Psoas muscle (tissue), 8 donors: ENCODE measurements at regions of chr20 and their contacts with region 1.

Region 1: DNA sequence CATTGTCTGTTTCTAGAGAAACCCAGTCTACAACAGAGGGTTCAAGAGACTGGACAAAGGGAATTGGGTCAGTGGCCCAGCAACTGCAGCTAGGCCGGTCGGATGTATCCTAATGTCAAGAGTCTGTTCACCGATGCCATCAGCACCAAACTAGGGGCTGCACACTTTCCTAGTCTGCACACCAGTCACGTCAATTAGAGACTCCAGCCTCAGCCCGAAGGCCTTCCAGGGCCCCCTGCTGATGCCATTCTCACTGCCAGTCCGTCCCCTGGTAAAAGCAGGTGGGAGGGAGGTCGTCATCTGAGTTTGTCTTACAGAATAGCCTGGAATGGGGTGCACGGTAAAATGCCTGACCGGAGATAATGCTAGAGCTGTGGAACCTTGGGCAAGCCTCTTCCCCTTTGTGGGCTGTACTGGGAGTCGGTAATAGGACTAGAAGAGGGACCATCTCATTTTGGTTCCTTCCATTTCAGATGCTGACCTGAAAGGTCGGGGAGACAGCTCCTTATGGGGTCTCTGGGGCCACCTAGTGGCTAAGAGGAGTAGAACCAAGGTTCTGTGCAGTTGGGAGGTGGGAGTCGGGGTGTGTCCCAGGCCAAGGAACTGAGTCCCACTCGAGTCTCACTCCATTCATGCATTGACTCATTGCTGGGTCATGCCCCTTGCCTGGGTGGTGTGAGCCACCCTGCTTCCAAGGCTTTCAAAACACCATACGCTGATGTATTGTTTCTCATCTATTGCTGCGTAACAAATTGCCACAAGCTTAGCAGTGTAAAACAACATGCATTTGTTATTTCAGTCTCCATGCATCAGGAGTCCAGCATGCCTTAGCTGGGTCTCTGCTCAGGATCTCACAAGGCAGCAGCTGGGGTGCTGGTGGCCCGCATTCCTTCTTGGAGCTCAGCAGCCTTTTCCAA is 5.1 kb downstream of the SOX12 start:
- DNase-seq: peak; percentile 39 to 56
- ATAC-seq: peak; percentile 48 to 74 (median 63)
- H3K4me3 ChIP-seq: no peak overlapping the region
- H3K27ac ChIP-seq: no peak overlapping the region
- H3K4me1 ChIP-seq: no peaks in the 10 kb centered on the region
- H3K27me3 ChIP-seq: no peaks in the 10 kb centered on the region
- CTCF ChIP-seq: peak; percentile 78

Region 2: GRCh38 chr20:208942-209566 is 121.4 kb before region 1 on chr20:
- intact Hi-C with region 1: loop called in 1 of 2 experiments (anchors 5 kb)
- DNase-seq: no peak
- ATAC-seq: peak; percentile 58 to 70 (median 67)
- H3K4me3 ChIP-seq: no peak overlapping the region
- H3K27ac ChIP-seq: no peak overlapping the region
- H3K4me1 ChIP-seq: no peaks in the 10 kb centered on the region
- H3K27me3 ChIP-seq: no peaks in the 10 kb centered on the region
- CTCF ChIP-seq: peak; percentile 40

Region 3: GRCh38 chr20:278607-279571 is 51.6 kb before region 1 on chr20:
- intact Hi-C with region 1: loop called in 1 of 2 experiments (anchors 10 kb)
- DNase-seq: peak in 1 of 2 donors; percentile 63
- ATAC-seq: peak in 1 of 4 donors; percentile 54
- H3K4me3 ChIP-seq: peak overlapping the region; percentile 38
- H3K27ac ChIP-seq: no peak overlapping the region
- H3K4me1 ChIP-seq: no peaks in the 10 kb centered on the region
- H3K27me3 ChIP-seq: no peaks in the 10 kb centered on the region
- CTCF ChIP-seq: no peak